ENCODE measurements at regions of chr14 and their contacts with region 1.

Region 1: DNA sequence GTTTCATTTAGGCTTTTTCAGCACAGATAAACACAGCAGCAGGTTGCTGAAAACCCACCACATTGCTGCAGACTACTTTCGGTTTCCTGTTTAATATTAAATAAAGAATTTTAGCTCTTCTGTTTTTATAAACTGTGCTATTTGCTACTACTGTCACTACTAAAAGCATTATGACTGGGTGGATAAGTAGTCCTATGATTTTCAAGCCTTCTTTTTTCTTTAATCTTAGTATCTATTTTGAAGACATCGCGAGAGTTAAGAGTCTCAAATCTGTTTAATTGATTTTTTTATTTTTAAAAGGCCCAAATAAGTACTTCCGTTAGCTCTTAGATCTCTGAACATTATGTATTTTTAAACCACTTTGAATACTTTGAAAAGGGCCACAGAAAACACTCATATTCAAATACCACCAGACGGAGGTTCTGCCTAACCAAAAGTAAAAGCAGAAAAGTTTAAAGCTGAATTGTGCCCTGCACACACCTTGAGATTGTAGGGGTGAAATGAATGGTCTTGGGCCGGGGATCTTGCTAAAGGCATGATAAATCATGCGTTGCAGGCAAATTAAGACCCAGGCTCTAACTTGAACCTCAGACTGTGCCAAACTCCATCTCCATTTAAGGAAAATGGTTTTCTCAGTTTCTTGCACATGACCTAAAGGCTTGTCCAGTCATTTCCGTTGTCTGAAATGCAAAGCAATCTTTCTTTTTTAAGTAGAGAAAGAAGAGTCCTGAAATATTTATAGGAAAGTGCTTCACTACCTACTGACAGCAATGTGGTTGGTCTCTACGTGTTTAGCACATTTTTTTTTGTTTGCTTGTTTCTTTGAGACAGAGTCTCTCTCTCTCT is 13.6 kb upstream of the FOXN3 start:
- DNase-seq: no peak
- H3K4me3 ChIP-seq: peak overlapping the region; percentile 2 to 17
- H3K27ac ChIP-seq: peak overlapping the region; percentile 48 to 72
- H3K4me1 ChIP-seq: peaks cover 5 to 11% of the 10 kb centered on the region in 2 donors
- H3K27me3 ChIP-seq: no peaks in the 10 kb centered on the region
- CTCF ChIP-seq: no peak
- POLR2A ChIP-seq: no peak

Region 2: GRCh38 chr14:89165189-89166181 is 265.1 kb before region 1 on chr14:
- intact Hi-C with region 1: no loop called
- DNase-seq: no peak
- H3K4me3 ChIP-seq: peak overlapping the region in 1 of 2 donors; percentile 1
- H3K27ac ChIP-seq: peak overlapping the region; percentile 28 to 71
- H3K4me1 ChIP-seq: peaks cover 0 to 8% of the 10 kb centered on the region in 2 donors
- H3K27me3 ChIP-seq: no peaks in the 10 kb centered on the region
- CTCF ChIP-seq: no peak
- POLR2A ChIP-seq: no peak

Region 3: DNA sequence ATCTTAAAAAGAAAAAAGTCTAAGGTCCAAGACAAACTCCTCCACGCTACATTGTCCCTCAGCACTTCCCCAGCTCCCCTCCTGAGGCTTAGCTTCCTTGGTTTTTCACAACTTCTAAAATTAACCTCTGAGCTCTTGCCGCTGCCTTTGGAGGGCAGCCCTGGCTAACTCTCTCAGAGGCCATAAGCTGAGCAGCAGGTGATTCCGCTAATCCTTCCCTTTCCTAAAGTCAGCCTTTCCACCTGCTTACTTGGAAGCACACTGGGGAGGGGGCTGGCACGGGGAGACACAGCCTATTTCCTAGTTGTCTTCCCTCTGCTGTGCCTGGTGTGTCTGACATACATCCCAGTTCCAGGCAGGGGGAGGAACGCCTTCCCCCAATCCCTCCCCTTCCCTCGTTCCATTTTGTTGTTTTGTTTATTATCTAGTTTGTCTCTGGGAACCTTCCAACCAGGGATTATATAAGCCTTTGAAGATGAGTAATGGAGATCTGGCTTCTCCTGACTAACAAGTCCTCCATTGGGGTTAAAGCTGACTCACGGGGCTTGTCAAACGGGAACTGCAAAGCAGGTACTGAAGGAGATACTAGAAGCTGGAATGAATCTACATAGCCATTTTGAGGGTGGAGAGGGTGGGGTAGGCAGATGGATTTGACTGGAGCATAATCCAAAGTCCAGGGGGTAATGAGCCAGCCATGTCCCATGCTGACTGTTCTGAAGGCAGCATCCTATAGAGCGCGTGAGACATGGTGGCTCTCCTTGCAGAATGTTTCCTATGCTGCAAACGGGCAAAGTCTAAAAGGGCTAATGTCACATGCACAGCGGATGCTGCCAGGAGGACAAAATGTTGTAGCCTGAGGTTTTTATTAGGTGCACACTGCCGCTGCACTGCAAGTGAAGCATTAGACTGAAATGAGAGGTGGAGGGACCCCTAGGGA is 244.4 kb before region 1 on chr14:
- intact Hi-C with region 1: loop called (anchors 10 kb)
- DNase-seq: peak; percentile 32 to 48
- H3K4me3 ChIP-seq: no peak overlapping the region
- H3K27ac ChIP-seq: peak overlapping the region; percentile 35 to 41
- H3K4me1 ChIP-seq: peaks cover 0 to 4% of the 10 kb centered on the region in 2 donors
- H3K27me3 ChIP-seq: no peaks in the 10 kb centered on the region
- CTCF ChIP-seq: no peak
- POLR2A ChIP-seq: no peak

Region 4: GRCh38 chr14:89563471-89563870 is 132.9 kb after region 1 on chr14:
- intact Hi-C with region 1: no loop called
- DNase-seq: no peak
- H3K4me3 ChIP-seq: no peak overlapping the region
- H3K27ac ChIP-seq: no peak overlapping the region
- H3K4me1 ChIP-seq: no peaks in the 10 kb centered on the region
- H3K27me3 ChIP-seq: no peaks in the 10 kb centered on the region
- CTCF ChIP-seq: no peak
- POLR2A ChIP-seq: no peak

Region 5: DNA sequence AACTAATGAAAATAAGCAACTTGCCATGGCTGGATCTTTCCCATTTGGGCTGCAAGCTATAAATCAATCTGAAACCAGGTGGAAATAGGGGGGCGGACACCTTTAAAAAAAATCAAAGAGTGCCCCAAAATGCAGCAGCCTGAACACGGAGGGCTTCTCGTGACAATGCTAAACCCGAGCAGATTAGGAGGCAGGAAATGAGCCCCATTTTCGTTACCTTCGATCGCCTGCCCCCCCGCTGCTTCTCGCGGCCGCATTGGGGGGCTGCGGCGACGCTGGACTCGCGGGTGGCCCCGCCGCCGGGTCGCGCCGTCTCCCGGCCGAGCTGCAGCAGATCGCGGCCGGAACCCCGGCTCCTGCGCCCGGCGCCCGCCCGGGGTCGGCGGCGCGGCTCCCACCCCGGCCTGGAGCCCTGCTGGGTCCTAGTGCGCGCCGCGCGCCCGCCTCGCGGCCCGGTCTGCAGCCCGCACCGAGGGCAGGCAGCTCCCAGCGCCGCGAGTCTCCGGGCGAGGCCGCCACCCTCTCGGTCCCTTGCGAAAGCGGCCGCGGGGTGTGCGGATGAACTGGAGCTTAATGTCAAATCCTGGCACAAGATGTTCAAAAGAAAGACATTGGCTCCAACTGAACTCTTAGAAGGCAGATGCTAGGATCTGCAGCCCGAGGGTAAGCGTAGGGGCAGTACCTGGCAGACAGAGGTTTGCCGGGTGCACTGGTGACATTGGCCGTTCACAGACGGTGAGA is 188.4 kb after region 1 on chr14:
- intact Hi-C with region 1: loop called (anchors 10 kb)
- DNase-seq: peak; percentile 24 to 59
- H3K4me3 ChIP-seq: peak overlapping the region; percentile 53 to 61
- H3K27ac ChIP-seq: peak overlapping the region; percentile 56 to 81
- H3K4me1 ChIP-seq: no peaks in the 10 kb centered on the region
- H3K27me3 ChIP-seq: no peaks in the 10 kb centered on the region
- CTCF ChIP-seq: peak in 2 of 4 experiments; percentile 7 to 13
- POLR2A ChIP-seq: peak in 1 of 2 donors; percentile 41

Region 6: DNA sequence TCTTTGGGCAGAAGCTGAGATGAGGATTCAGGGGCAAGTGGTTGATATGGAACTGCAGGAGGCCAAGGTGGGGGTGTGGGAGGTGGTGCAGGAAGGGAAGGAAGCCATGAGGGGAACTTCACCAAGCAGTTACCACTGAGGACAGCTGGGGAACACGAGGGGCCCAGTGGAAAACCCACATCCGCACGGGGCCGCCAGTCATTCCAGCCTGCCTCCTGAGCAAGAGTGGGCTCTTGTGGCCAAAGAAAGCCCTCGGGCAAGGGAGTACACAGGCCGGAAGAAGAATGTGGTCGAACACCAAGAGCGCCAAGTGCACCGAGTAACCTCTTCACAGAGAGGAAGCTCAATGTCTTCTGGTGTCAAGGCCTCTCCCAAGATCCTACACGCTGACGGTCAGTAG is 238.6 kb after region 1 on chr14:
- intact Hi-C with region 1: no loop called
- DNase-seq: no peak
- H3K4me3 ChIP-seq: no peak overlapping the region
- H3K27ac ChIP-seq: no peak overlapping the region
- H3K4me1 ChIP-seq: no peaks in the 10 kb centered on the region
- H3K27me3 ChIP-seq: no peaks in the 10 kb centered on the region
- CTCF ChIP-seq: no peak
- POLR2A ChIP-seq: no peak